Activated naive CD4-positive, alpha-beta T cell treated with anti-CD3 and anti-CD28 coated beads, Interleukin-2, amount 10 ng/mL, durations not matched to agents 7 days and 5 days (primary cell): ENCODE measurements at regions of chr18 and their contacts with region 1.

Region 1: DNA sequence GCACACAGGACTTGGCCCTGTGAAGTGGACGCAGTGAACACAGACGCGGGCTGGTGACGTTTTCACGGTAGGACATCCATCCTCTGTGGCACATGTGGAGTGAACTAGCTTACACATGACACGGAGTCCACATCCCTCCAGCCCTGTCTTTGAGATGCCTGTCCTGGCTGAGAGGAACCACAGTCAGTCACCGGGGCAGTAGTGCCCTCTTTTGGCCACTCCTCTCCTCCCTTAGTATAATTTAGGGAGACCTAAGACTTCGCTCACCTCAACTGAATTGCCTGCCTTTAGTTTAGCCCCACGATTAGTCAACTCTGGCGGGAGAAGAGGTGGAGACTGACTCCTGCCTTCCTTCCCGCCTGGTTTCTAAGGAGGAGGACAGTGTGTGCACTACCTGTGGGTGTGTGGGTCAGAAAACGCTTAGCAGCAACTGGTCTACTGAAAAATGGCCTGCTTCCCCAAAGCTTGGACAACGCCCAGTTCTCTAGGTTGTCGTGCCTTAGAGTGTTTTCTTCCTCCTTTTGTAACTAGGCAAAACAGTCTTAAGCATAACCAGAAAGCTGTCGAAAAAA is 70.6 kb downstream of the MBP start:
- DNase-seq: peak; percentile 59
- H3K4me3 Mint-ChIP-seq: peak overlapping the region; percentile 55
- H3K27ac Mint-ChIP-seq: peak overlapping the region; percentile 100
- H3K4me1 Mint-ChIP-seq: peaks cover 89% of the 10 kb centered on the region
- H3K27me3 Mint-ChIP-seq: no peaks in the 10 kb centered on the region

Region 2: GRCh38 chr18:76771192-76771799 is 290.7 kb before region 1 on chr18:
- CTCF ChIA-PET with region 1: no interaction called
- DNase-seq: no peak
- H3K4me3 Mint-ChIP-seq: no peak overlapping the region
- H3K27ac Mint-ChIP-seq: no peak overlapping the region
- H3K4me1 Mint-ChIP-seq: peaks cover 7% of the 10 kb centered on the region
- H3K27me3 Mint-ChIP-seq: peaks cover 28% of the 10 kb centered on the region

Region 3: DNA sequence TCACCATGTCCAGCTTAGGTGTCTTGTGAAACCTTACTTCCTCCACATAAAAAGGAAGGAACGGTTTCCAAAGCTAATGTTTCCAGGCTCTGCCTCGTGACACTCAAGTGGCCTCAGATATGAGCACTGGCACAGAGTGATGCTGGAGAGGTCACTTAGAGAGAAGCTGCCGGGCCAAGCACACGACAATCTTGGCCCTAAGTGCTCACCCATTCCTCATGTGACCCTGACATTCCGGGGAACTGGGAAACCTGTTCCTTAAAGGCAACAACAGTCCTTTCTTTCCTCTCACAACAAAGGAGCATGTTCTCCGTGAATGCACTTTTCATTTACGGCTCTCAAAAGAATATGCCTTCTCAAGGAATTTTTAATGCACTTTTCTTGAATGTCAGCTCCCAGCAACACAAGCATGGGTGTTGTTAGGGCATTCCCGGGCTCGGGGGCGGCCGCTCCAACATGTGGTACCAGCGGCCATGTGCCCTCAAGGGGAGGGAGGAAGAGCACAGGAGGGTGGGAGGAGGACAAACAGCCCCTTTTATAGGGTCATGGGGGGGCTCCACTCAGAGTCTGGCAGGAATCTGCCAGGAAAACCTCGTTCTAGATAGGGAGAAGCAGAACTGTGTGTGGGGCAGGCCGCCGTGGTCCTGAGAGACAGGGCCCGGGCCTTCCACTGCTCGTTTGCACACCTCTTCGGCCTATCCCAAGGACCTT is 48.1 kb before region 1 on chr18:
- CTCF ChIA-PET with region 1: no interaction called
- DNase-seq: no peak
- H3K4me3 Mint-ChIP-seq: no peak overlapping the region
- H3K27ac Mint-ChIP-seq: no peak overlapping the region
- H3K4me1 Mint-ChIP-seq: peaks cover 5% of the 10 kb centered on the region
- H3K27me3 Mint-ChIP-seq: no peaks in the 10 kb centered on the region

Region 4: GRCh38 chr18:77101410-77102258 is 39.6 kb after region 1 on chr18:
- CTCF ChIA-PET with region 1: interaction called, 17 read pairs
- DNase-seq: peak; percentile 57
- H3K4me3 Mint-ChIP-seq: peak overlapping the region; percentile 74
- H3K27ac Mint-ChIP-seq: peak overlapping the region; percentile 100
- H3K4me1 Mint-ChIP-seq: peaks cover 97% of the 10 kb centered on the region
- H3K27me3 Mint-ChIP-seq: no peaks in the 10 kb centered on the region

Region 5: DNA sequence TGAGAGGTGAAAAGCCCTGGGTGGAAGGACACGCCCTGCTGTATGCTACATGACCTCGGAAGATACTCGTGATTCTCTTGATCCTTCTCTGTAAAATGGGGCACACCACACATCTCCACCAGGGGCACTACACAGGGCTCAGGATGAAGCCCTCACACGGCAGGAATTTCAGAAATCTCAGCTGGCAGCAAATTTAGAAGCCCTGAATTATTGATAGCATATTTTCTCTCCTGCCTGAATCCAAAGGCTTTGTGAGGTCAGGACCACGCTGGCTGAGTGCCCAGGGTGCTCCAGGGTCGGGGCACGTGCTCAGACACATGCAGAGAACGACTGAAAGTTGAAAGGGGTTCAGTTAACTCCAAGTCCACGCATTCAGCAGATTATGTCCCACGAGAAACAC is 145.5 kb after region 1 on chr18:
- CTCF ChIA-PET with region 1: interaction called, 24 read pairs
- DNase-seq: peak; percentile 54
- H3K4me3 Mint-ChIP-seq: no peak overlapping the region
- H3K27ac Mint-ChIP-seq: no peak overlapping the region
- H3K4me1 Mint-ChIP-seq: peaks cover 50% of the 10 kb centered on the region
- H3K27me3 Mint-ChIP-seq: peaks cover 23% of the 10 kb centered on the region